ENCODE measurements at regions of chr1 and their contacts with region 1.

Region 1: DNA sequence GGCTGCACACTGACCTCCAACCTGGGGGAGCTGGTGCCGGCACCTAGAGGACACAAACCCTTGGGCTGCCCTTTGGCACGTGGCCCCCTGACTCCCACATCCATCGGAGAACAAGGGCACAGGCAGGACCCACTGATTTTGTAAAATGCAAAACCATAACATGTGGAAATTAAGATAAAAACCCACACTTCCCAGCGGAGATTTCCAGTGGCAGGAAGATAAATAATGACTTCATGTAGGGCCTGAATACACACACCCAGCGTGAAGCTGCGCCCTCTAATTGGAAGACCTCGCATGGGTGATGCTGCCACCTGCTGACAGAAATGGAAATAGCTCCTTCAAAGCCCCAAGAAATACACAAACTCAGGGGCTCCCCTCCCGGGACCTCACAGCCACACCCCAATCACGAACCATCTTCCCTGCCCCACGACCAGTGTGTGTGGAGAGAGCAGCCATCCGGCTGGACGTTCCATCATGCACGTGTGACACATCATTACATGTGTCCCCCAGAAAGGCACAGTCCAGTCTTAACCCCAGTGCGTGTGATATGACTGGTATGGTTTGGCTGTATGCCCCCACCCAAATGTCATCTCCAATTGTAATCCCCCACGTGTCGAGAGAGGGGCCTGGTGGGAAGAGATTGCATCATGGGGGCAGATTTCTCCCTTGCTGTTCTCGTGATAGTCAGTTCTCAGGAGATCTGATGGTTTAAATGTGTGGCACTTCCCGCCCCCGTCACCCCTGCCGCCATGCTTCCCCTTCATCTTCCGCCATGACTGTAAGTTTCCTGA is 5.7 kb upstream of the TPRG1L start:
- DNase-seq: peak; percentile 81
- H3K27ac ChIP-seq: no peak overlapping the region
- CTCF ChIP-seq: peak; percentile 83

Region 2: DNA sequence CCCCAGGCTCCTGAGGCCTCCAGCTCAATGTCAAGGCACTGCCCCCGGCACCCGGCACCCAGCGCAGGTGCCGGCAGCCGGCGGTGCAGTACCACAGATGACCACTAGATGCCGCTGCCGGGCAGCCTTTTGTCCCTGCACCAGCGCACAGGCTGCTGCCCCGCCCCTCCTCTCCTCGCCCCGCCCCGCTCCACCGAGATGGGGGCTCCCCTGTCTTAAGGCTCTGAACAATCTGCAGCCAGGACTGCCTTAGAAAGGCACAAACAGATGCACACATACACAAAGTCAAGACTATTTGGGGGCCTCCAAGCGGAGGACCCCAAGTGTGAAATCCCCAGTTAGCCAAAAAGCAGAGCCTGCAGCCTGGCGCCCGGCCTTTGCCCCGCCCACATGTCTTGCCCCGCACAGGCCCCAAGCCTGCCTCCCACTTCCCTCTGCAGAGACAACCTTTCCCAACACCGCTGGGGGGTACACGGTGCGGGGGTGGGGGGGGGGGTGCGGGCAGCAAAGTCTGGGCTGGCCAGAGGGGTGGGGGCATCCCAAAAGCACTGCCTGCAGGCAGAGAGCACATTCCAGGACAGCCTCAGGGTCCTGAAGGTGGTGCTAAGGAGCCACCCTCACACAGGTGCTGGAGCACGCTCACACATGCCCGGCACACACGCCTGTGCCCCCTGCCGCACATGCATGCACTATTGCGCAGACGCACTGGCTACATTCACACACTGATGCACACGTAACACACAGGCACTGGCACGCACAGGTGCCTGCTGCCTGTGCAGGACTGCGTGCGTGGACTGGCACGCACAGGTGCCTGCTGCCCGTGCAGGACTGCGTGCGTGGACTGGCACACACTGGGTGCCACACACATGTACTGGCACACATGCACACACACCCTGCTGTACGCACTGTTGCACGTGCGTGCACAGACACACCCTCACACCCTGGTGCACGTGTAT is 127.5 kb before region 1 on chr1:
- CTCF ChIA-PET with region 1: interaction called, 21 read pairs
- POLR2A ChIA-PET with region 1: no interaction called
- DNase-seq: peak; percentile 66
- H3K27ac ChIP-seq: peak overlapping the region; percentile 24
- CTCF ChIP-seq: peak; percentile 95

Region 3: GRCh38 chr1:3564921-3565827 is 53.9 kb before region 1 on chr1:
- CTCF ChIA-PET with region 1: interaction called, 18 read pairs
- POLR2A ChIA-PET with region 1: no interaction called
- DNase-seq: peak; percentile 72
- H3K27ac ChIP-seq: no peak overlapping the region
- CTCF ChIP-seq: peak; percentile 89

Region 4: GRCh38 chr1:3695326-3696217 is 76.5 kb after region 1 on chr1:
- CTCF ChIA-PET with region 1: no interaction called
- POLR2A ChIA-PET with region 1: no interaction called
- DNase-seq: peak; percentile 65
- H3K27ac ChIP-seq: peak overlapping the region; percentile 100
- CTCF ChIP-seq: peak; percentile 91

Measured in RWPE1 (cell line).